BJ (cell line): ENCODE measurements at regions of chr2 and their contacts with region 1.

Region 1: DNA sequence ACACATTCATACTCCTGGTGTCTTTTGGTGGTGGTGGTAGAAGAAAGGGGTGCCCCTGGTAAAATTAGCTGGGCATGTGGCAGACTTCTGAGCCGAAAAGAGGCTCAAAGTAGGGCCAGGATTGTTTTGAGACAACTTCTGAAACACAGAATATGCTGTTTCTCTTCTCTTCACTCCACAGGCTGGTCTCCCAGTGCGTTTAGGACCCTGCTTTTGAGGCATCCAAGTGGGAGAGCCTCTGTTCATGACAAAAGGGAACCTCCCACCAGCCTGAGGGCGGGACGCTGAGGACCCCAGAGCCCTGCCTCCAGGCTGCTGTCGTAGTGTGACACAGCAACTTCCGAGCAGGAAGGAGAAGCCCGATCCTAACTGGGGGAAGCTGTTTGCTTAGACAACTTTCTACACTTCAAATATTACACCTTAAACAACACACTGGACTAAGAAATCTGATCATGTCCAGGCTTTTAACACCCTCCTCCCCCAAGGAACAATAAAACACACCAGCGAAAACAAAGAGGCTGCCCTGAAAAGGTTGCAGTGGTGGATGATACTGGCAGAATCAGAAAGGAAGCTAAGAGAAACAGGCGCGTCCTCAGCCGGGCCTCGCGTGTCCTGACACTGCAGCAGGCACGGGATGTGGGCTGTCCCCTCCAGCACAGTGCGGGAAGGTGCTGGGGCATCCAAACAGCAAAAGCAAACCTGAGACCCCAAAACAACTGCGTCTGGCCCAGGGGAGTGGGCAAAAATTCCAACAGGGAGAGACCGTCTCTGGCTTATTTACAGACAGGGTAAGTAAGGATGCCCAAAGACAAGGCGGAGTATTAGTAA is 9.3 kb downstream of the SERTAD2 start:
- DNase-seq: peak; percentile 30
- H3K4me3 ChIP-seq: peak overlapping the region; percentile 47
- H3K27me3 ChIP-seq: no peaks in the 10 kb centered on the region
- CTCF ChIP-seq: no peak

Region 2: GRCh38 chr2:64750817-64751285 is 106.5 kb after region 1 on chr2:
- CTCF ChIA-PET with region 1: interaction called, 21 read pairs
- POLR2A ChIA-PET with region 1: no interaction called
- DNase-seq: peak; percentile 99
- H3K4me3 ChIP-seq: peak overlapping the region; percentile 72
- H3K27me3 ChIP-seq: no peaks in the 10 kb centered on the region
- CTCF ChIP-seq: no peak

Region 3: DNA sequence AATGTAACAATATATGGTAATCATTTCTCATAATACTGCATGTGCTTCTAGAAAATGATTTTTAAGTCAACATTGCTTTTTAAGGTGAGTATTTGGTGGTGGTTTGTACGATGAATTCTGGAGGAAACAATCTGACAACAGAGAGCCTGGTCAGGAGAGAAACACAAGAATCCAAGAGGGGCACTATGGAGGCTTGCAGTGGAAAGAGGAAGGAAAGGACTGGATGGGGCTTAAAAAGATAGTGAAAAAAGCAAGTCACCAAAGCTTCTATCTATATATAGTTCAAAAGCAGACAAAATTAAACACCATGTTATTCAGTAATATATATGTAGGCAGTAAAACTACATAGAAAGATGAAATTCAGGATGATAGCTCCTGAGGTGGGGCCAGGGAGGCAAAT is 118.7 kb after region 1 on chr2:
- CTCF ChIA-PET with region 1: interaction called, 10 read pairs
- POLR2A ChIA-PET with region 1: no interaction called
- DNase-seq: no peak
- H3K4me3 ChIP-seq: no peak overlapping the region
- H3K27me3 ChIP-seq: no peaks in the 10 kb centered on the region
- CTCF ChIP-seq: no peak